Posterior vena cava (tissue), 2 donors: ENCODE measurements at regions of chr2 and their contacts with region 1.

Region 1: GRCh38 chr2:137983638-137984226 is 19.5 kb downstream of the HNMT start:
- DNase-seq: no peak

Region 2: GRCh38 chr2:137966043-137966442 is 17.7 kb before region 1 on chr2:
- intact Hi-C with region 1: loop called in 1 of 2 experiments (anchors 2 kb)
- DNase-seq: no peak